CD8-positive, alpha-beta T cell (primary cell): ENCODE measurements at regions of chr3 and their contacts with region 1.

Region 1: DNA sequence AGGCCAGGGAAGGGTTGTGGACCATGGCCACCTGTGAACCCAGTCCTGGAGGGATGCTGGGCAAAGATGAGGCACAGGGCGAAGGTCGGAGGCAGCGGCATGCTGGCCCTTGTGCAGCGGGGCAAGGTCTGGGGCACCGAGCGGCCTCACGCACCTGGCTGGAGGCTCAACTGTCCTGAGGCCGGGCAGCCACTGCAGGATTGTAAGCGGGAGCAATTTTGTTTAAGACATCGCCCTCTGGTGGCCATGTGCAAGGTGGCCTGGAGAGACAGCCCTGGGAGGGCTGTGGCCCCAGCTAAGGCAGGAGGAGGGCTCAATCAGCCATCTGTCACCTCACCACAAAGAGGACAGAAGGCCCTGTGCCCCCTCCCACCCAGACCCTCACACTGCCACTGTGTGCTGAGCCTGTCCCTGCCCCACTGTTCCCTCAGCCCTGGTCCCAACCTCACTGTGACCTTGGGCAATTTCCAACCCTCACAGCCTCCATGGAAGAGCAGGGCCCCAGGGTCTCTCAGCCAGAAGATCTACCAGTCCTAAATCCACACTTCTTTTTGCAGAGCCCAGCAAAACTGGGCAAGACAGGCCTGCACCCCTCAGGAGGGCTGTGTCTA is 46.2 kb downstream of the TPRA1 start:
- DNase-seq: peak; percentile 26 to 77 (median 66)
- ATAC-seq: peak; percentile 44
- H3K4me3 ChIP-seq: no peak overlapping the region
- H3K4me3 Mint-ChIP-seq: no peak overlapping the region
- H3K27ac ChIP-seq: no peak overlapping the region
- H3K27ac Mint-ChIP-seq: no peak overlapping the region
- H3K4me1 ChIP-seq: peaks cover 11% of the 10 kb centered on the region
- H3K4me1 Mint-ChIP-seq: peaks cover 11% of the 10 kb centered on the region
- H3K27me3 ChIP-seq: no peaks in the 10 kb centered on the region
- H3K27me3 Mint-ChIP-seq: no peaks in the 10 kb centered on the region
- CTCF ChIP-seq: peak; percentile 80

Region 2: GRCh38 chr3:126522363-126522788 is 1021.9 kb before region 1 on chr3:
- CTCF ChIA-PET with region 1: interaction called, 22 read pairs
- POLR2A ChIA-PET with region 1: no interaction called
- intact Hi-C with region 1: loop called in 1 of 2 experiments (anchors 1 kb)
- DNase-seq: peak in 7 of 9 experiments; percentile 25 to 71 (median 50)
- ATAC-seq: no peak
- H3K4me3 ChIP-seq: no peak overlapping the region
- H3K4me3 Mint-ChIP-seq: no peak overlapping the region
- H3K27ac ChIP-seq: no peak overlapping the region
- H3K27ac Mint-ChIP-seq: no peak overlapping the region
- H3K4me1 ChIP-seq: no peaks in the 10 kb centered on the region
- H3K4me1 Mint-ChIP-seq: peaks cover 2% of the 10 kb centered on the region
- H3K27me3 ChIP-seq: no peaks in the 10 kb centered on the region
- H3K27me3 Mint-ChIP-seq: peaks cover 22% of the 10 kb centered on the region
- CTCF ChIP-seq: peak; percentile 83

Region 3: GRCh38 chr3:126679318-126679751 is 865.0 kb before region 1 on chr3:
- CTCF ChIA-PET with region 1: interaction called, 118 read pairs
- POLR2A ChIA-PET with region 1: no interaction called
- intact Hi-C with region 1: loop called in 1 of 2 experiments (anchors 1 kb)
- DNase-seq: peak; percentile 61 to 86 (median 75)
- ATAC-seq: peak; percentile 90
- H3K4me3 ChIP-seq: peak overlapping the region in 1 of 2 experiments; percentile 7
- H3K4me3 Mint-ChIP-seq: peak overlapping the region; percentile 37
- H3K27ac ChIP-seq: no peak overlapping the region
- H3K27ac Mint-ChIP-seq: no peak overlapping the region
- H3K4me1 ChIP-seq: peaks cover 3% of the 10 kb centered on the region
- H3K4me1 Mint-ChIP-seq: peaks cover 3% of the 10 kb centered on the region
- H3K27me3 ChIP-seq: no peaks in the 10 kb centered on the region
- H3K27me3 Mint-ChIP-seq: peaks cover 6% of the 10 kb centered on the region
- CTCF ChIP-seq: peak; percentile 96

Region 4: GRCh38 chr3:126752303-126752842 is 791.9 kb before region 1 on chr3:
- CTCF ChIA-PET with region 1: interaction called, 6 read pairs
- POLR2A ChIA-PET with region 1: no interaction called
- intact Hi-C with region 1: loop called in 1 of 2 experiments (anchors 2 kb)
- DNase-seq: peak in 8 of 9 experiments; percentile 26 to 60 (median 38)
- ATAC-seq: no peak
- H3K4me3 ChIP-seq: no peak overlapping the region
- H3K4me3 Mint-ChIP-seq: no peak overlapping the region
- H3K27ac ChIP-seq: no peak overlapping the region
- H3K27ac Mint-ChIP-seq: no peak overlapping the region
- H3K4me1 ChIP-seq: no peaks in the 10 kb centered on the region
- H3K4me1 Mint-ChIP-seq: peaks cover 8% of the 10 kb centered on the region
- H3K27me3 ChIP-seq: no peaks in the 10 kb centered on the region
- H3K27me3 Mint-ChIP-seq: no peaks in the 10 kb centered on the region
- CTCF ChIP-seq: no peak

Region 5: GRCh38 chr3:127512256-127512655 is 32.0 kb before region 1 on chr3:
- CTCF ChIA-PET with region 1: no interaction called
- POLR2A ChIA-PET with region 1: no interaction called
- intact Hi-C with region 1: no loop called
- DNase-seq: no peak
- ATAC-seq: no peak
- H3K4me3 ChIP-seq: no peak overlapping the region
- H3K4me3 Mint-ChIP-seq: no peak overlapping the region
- H3K27ac ChIP-seq: no peak overlapping the region
- H3K27ac Mint-ChIP-seq: no peak overlapping the region
- H3K4me1 ChIP-seq: no peaks in the 10 kb centered on the region
- H3K4me1 Mint-ChIP-seq: no peaks in the 10 kb centered on the region
- H3K27me3 ChIP-seq: no peaks in the 10 kb centered on the region
- H3K27me3 Mint-ChIP-seq: peaks cover 4% of the 10 kb centered on the region
- CTCF ChIP-seq: no peak

Region 6: DNA sequence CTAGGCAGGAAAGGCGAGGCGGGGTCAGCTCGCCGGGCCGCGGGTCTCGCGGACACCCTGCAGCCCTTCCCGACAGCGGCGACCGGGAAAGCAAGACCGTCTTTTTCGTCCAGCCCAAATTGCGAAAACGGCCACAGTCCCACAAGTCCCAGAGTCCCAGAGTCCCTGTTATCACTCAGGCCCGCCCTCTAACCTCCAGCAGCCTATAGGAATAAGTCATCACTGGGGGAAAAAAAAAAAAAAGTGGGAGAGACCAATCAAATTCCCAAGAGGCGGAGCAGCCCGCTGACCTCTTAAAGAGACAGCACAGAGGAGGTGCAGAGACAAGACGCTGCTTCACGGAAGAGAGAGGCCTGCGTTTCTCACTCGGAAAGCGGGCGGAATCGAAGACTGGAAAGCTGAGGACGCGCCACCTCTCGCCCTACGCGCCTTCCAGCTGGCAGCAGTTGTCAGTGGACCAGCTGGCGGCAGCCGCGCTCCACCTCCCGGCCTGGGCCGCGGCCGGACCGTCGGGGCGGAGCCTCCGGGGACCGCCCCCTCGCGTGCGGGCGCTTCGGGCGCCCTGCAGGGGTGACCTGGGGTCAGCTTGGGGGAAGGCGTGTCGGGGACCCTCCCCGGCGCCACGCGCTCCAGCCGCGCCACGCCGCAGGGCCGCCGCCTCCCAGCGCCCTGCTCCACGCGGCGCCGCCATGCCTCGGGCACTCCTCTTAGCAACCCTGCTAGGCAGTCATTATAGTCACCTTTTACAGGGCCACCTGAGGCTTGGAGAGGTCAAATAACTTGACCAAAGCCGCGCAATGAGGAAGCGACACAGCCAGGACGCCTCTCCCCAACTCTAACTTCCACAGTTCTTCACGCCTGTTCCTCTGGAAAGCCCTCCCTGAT is 46.5 kb after region 1 on chr3 and contains the start of gene TPRA1:
- CTCF ChIA-PET with region 1: no interaction called
- POLR2A ChIA-PET with region 1: interaction called, 3 read pairs
- intact Hi-C with region 1: loop called in 1 of 2 experiments (anchors 1 kb)
- DNase-seq: peak; percentile 46 to 94 (median 79)
- ATAC-seq: peak; percentile 86
- H3K4me3 ChIP-seq: peak within 1 kb of the TSS; percentile 75 to 81
- H3K4me3 Mint-ChIP-seq: peak within 1 kb of the TSS; percentile 97
- H3K27ac ChIP-seq: peak within 1 kb of the TSS; percentile 68 to 74
- H3K27ac Mint-ChIP-seq: peak within 1 kb of the TSS; percentile 91
- H3K4me1 ChIP-seq: peaks cover 20% of the 10 kb centered on the region
- H3K4me1 Mint-ChIP-seq: peaks cover 35% of the 10 kb centered on the region
- H3K27me3 ChIP-seq: no peaks in the 10 kb centered on the region
- H3K27me3 Mint-ChIP-seq: no peaks in the 10 kb centered on the region
- CTCF ChIP-seq: no peak
- total RNA-seq, gene TPRA1: 6.0 to 6.1 TPM

Region 7: DNA sequence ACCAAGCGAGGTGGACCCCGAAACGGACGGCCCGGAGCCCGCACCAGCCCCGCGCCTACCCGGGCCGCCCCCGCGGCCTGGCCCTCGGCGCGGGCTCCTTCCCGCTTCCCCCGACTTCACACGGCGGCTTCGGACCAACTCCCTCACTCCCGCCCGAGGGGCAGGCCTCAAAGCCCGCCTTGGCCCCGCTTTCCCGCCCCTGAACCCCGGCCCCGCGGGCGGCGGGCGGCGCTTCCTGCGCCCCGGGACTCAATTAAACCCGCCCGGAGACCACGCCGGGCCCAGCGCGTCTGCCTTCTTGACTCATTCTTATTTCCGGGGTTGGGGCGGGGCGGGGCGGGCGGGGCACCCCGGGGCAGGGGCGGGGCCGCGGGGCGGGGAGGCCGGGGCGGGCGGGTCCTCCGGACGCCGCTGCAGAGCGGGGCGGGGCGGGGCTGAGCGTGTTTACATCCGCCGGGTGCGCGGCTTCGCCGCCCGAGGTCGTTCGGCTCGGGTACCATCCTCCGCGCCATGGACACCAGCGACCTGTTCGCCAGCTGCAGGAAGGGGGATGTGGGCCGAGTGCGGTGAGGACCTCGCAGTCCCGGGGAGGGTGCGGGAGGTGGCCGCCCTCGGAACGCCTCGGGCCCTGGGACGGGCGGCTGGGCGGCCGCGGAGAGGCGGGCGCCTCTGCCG is 128.4 kb after region 1 on chr3 and contains the start of gene ABTB1:
- CTCF ChIA-PET with region 1: no interaction called
- POLR2A ChIA-PET with region 1: no interaction called
- intact Hi-C with region 1: no loop called
- DNase-seq: peak; percentile 74 to 92 (median 87)
- ATAC-seq: peak; percentile 83
- H3K4me3 ChIP-seq: peak within 1 kb of the TSS; percentile 71 to 87
- H3K4me3 Mint-ChIP-seq: peak within 1 kb of the TSS; percentile 93
- H3K27ac ChIP-seq: peak within 1 kb of the TSS; percentile 80 to 92
- H3K27ac Mint-ChIP-seq: peak within 1 kb of the TSS; percentile 99
- H3K4me1 ChIP-seq: peaks cover 31% of the 10 kb centered on the region
- H3K4me1 Mint-ChIP-seq: peaks cover 31% of the 10 kb centered on the region
- H3K27me3 ChIP-seq: no peaks in the 10 kb centered on the region
- H3K27me3 Mint-ChIP-seq: no peaks in the 10 kb centered on the region
- CTCF ChIP-seq: no peak
- total RNA-seq, gene ABTB1: 86.0 to 88.1 TPM